AG04450 (cell line): ENCODE measurements at regions of chr3 and their contacts with region 1.

Region 1: DNA sequence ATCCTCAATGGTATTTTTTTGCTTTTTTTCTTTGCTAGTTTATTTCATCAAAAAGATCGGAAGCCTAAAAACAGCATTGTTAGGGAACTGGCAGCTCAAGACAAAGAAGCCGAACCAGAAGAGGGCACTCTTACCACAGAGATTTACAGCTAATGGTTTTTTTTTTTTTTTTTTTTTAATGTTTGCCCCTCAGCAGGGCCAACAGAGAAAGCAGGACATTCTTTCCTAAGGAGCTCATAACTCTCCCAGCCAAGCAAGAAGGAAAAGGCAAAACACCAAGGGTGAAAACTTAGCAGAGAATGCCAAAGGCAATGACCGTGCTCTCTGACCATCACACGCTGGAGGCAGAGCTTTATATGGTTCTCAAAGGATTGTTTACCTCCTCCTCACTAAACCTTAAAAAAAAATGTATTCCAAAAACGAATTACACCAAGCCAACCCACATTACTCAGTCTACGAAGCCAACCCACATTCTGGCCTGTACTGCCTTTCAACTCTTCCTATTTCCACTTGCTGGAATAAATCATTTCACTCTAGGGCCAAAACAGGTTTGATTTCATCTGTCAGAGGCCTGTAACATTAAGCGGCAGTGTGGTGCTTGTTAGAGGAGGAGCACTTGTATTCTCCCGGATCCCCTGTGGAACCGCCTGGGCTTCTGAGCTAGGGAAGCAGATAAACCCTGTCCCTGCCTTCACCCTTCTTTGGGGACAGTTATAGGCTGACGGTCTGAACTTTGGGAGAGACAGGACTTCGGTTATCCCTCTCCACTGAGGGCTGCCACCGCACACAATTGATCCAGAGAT is 35.6 kb upstream of the GYG1 start:
- DNase-seq: peak; percentile 87
- H3K4me3 ChIP-seq: no peak overlapping the region
- H3K27ac ChIP-seq: peak overlapping the region; percentile 93
- H3K27me3 ChIP-seq: no peaks in the 10 kb centered on the region
- CTCF ChIP-seq: peak; percentile 78

Region 2: GRCh38 chr3:148981273-148981672 is 25.5 kb after region 1 on chr3:
- CTCF ChIA-PET with region 1: interaction called, 11 read pairs
- POLR2A ChIA-PET with region 1: no interaction called
- DNase-seq: no peak
- H3K4me3 ChIP-seq: no peak overlapping the region
- H3K27ac ChIP-seq: no peak overlapping the region
- H3K27me3 ChIP-seq: no peaks in the 10 kb centered on the region
- CTCF ChIP-seq: no peak

Region 3: DNA sequence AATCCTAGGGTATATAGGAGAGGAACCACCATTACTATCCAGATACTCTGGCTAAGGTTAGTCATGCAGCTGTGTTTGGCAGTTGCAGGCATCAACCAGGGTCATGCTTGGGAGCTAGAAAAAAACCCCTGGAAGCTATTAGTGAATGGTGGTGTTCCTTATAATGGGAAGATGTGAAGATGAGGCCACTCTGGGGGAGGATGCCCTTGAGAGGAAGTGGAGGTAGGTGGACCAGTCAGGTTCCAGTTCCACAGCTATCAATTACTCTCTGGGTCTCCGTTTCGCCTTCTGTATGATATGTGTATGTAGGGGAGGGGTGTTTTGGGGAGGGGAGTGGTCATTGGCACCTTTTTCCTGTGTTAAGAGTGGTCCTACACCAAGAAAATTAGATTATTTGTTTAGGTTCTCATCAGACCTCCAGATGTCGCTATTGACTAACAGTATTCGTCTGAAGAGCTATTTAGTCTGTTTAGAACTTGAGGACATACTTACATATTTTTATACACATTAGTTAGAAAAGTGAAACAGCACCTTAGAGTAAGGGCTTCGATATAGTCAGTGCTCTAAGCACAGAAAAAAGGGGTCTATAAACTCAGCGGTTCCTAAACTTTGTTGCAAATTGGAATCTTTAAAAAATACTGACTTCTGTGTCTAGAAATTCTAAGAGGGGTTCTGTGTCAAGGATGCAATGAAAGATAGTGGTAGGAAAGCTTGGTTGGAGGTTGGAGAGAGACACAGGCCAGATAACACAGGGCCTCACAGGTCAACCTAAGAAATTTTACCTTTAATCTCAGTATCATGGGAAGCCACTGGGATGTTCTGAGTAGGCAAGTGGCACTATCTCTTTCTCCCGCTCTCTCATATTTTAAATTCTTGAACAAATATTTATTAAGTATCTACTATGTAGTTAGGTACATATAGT is 164.6 kb after region 1 on chr3:
- CTCF ChIA-PET with region 1: interaction called, 68 read pairs
- POLR2A ChIA-PET with region 1: interaction called, 10 read pairs
- DNase-seq: peak; percentile 33
- H3K4me3 ChIP-seq: no peak overlapping the region
- H3K27ac ChIP-seq: no peak overlapping the region
- H3K27me3 ChIP-seq: no peaks in the 10 kb centered on the region
- CTCF ChIP-seq: peak; percentile 59

Region 4: DNA sequence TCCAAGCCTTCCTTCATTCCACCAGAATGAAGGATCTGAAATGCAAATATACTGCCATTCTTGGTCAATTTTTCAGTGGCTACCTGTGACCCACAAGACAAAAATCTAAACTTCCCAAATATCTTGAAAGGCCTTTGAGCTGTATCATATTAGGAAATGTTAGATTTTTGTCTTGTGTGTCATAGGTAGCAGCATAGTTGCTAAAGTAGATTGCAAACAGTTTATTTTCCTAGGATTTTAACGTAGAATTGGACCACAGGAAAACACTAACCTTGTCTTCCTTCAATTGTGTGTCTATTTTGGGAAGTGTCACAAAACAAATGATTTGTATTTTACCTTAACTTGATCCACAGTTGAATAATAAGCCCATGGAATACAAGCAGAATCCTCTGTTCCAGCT is 223.5 kb after region 1 on chr3:
- CTCF ChIA-PET with region 1: interaction called, 13 read pairs
- POLR2A ChIA-PET with region 1: no interaction called
- DNase-seq: peak; percentile 44
- H3K4me3 ChIP-seq: no peak overlapping the region
- H3K27ac ChIP-seq: peak overlapping the region; percentile 54
- H3K27me3 ChIP-seq: no peaks in the 10 kb centered on the region
- CTCF ChIP-seq: no peak

Region 5: DNA sequence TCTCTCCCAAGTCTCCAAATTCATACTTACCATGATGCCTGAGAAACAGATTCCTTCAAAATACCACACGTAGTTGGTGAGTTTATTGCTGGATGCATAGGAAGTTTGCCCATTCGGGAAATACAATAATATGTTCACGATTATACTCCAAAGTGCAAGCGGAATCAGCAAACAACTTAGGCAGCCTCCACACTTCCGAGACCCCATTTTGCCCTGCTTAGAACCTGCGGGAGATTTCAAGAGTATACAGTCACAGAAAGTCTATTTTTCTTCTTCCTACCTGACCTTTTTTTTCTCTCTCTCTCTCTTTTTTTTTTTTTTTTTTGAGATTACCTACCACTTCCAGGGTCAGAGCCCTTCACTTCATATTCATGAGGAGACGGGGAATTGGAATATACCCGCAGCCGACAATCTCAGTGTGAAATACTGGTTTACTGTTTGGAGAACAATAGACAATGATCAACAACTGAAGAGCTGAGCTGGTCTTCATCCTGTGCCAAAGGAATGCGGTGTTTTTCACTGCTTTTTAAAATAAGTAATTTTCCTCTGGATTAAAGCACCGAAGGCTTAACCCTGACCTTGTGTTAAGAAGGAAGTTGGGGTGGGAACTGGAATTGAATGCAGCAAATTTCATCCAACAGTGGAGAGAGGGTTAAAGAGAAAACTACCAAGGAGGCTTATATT is 377.6 kb after region 1 on chr3 and contains the start of gene TM4SF18:
- CTCF ChIA-PET with region 1: interaction called, 21 read pairs
- POLR2A ChIA-PET with region 1: no interaction called
- DNase-seq: no peak
- H3K4me3 ChIP-seq: no peak within 1 kb of the TSS
- H3K27ac ChIP-seq: no peak within 1 kb of the TSS
- H3K27me3 ChIP-seq: no peaks in the 10 kb centered on the region
- CTCF ChIP-seq: no peak
- polyA plus RNA-seq, gene TM4SF18: 0.09 TPM in 1 of 2 replicates, not detected in the other

Region 6: GRCh38 chr3:149603126-149604074 is 647.7 kb after region 1 on chr3:
- CTCF ChIA-PET with region 1: interaction called, 12 read pairs
- POLR2A ChIA-PET with region 1: no interaction called
- DNase-seq: no peak
- H3K4me3 ChIP-seq: no peak overlapping the region
- H3K27ac ChIP-seq: no peak overlapping the region
- H3K27me3 ChIP-seq: no peaks in the 10 kb centered on the region
- CTCF ChIP-seq: no peak

Region 7: DNA sequence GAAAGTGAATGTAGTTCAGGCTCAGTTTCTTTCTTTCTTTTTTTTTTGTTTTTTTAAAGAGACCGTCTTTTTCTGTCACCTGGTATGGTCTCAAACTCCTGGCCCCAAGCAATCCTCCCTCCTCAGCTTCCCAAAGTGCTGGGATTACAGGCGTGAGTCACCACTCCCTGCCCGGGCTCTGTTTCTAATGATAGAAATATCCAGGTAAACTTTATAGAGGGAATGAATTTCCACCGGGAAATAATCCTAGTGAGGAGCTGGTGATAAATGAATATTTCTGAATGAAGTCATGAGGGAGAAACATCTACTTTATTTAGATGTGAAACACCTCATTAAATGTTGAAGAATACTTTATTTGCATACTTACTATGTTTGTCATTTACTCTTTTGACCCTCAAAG is 864.4 kb after region 1 on chr3:
- CTCF ChIA-PET with region 1: interaction called, 11 read pairs
- POLR2A ChIA-PET with region 1: no interaction called
- DNase-seq: no peak
- H3K4me3 ChIP-seq: no peak overlapping the region
- H3K27ac ChIP-seq: no peak overlapping the region
- H3K27me3 ChIP-seq: no peaks in the 10 kb centered on the region
- CTCF ChIP-seq: no peak